ENCODE measurements at regions of chr6 and their contacts with region 1.

Region 1: DNA sequence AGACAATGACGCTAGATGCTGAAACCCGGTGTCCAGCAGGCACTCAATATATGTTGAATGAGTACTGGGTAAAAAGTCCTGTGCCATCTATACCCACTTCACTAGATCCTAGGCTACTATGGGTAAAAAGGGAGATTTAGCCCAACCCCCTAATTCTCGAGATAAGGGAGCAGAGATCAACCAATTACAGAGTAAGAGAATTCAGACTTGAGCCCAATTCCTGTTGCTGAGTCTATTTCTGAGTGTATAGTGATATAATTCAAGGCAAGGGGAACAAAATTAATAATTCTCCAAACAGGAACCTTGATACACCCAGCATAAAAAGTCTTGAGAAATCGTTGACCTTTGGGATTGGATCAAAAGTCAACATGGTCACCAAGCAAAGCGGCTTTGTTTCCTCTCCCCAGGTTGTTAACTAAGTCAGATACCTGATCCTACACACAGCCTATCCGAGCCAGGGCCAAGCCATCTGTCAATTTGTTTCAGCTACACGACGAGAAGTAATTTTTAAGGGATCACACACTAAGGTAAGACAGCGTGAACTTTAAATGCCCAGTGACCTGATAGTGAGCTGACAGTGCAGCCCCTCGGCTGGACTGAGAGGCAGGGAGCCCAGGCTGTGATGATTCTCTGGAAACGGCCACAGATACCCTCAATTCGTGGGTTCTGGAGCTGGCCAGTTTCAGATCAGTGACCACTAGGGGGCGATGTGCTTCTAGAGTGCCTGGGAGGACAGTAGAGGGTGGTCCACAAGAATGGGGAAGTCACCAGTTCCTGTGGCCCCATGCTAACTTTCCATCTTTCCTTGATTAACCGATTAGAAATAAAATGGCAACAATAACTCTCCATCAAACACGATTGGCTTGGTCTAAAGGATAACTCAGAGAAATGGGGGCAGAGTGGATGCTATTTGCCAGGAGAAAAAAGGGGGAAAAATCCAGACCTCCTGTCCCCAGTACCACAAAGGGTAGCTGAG is 46.2 kb downstream of the SLC22A23 start:
- DNase-seq: no peak
- H3K4me3 ChIP-seq: no peak overlapping the region
- H3K27ac ChIP-seq: no peak overlapping the region
- H3K4me1 ChIP-seq: peaks cover 15% of the 10 kb centered on the region
- H3K27me3 ChIP-seq: no peaks in the 10 kb centered on the region
- CTCF ChIP-seq: peak; percentile 76 to 88

Region 2: DNA sequence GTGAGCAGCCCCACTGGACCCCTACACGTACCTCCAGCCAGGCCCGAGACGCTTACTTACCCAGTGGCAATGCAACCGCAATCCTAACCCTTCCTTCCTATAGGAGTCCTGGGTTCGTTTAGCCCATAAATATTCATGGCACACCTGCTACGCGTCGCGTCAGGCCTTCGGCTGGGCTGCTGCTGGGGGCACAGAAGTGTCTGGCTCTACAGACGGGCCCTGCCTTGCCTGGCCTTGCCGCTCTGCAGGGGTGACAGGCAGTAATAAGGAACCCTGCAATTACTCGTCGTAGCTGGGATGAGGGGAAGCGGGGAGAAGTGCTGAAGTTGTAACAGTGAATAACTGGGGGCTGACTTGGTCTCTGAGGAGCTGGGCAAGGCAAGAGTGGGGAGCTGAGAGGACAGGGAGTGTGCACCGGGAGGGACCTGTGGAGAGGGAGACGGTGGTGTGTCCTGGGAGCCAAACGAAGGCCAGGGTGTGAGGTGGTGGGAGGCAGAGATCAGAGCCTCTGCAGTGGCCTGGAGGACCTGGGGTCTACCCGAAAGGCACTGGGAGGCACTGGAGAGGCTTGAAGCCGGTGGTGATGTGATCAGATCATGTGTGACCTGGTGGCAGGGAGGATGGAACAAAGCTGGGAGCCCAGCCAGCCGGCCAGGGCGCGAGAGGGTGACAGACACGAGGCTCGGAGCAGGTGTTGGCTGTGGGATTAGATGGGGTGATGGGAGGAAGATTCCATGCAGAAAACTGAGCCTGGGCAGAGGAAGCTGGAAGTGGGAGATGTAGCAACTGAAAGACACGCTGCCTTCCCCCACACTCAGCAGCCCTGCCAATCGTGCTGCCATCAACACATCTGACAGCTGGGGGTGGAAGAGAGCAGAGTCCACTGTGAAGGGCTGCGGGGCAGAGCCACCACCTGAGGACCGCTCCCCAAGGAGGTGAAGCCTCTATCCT is 115.5 kb before region 1 on chr6:
- CTCF ChIA-PET with region 1: no interaction called
- dilution Hi-C with region 1: loop called (anchors 5 kb)
- in situ Hi-C with region 1: no loop called
- intact Hi-C with region 1: no loop called
- DNase-seq: no peak
- H3K4me3 ChIP-seq: no peak overlapping the region
- H3K27ac ChIP-seq: no peak overlapping the region
- H3K4me1 ChIP-seq: no peaks in the 10 kb centered on the region
- H3K27me3 ChIP-seq: no peaks in the 10 kb centered on the region
- CTCF ChIP-seq: no peak

Region 3: DNA sequence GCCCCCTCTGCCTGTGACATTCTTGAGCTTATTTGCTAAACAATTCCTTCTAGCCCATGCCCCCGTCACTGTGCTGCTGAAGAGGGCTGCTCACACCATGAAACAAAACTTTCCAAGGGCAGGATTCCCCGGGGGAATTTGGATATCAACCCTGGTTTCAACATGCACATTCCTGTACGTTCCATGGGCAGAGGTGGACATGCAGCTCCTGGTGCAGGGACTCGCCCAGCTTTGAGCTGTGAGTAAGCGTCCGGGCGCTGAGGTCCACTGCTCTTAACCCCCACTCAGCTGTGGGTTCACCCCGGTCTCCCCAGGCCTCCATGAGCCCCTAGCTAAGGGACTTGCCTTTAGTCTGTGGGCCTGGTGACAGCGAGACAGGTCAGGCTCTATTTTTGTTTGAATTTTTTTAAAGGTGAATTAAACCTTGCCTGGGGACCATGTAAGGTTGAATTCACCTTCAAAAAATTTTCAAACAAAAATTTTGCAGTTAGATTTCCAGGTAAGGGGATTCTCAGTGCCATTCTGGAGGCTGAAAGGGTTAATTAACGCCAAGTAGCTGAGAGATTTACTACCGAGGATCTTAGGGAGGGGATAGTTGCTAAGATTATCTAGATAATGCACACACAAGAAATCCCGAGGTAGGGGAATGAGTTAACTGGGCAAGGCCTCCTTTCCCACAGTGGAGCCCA is 116.4 kb after region 1 on chr6:
- CTCF ChIA-PET with region 1: no interaction called
- dilution Hi-C with region 1: no loop called
- in situ Hi-C with region 1: no loop called
- intact Hi-C with region 1: no loop called
- DNase-seq: peak; percentile 96
- H3K4me3 ChIP-seq: no peak overlapping the region
- H3K27ac ChIP-seq: peak overlapping the region; percentile 78
- H3K4me1 ChIP-seq: peaks cover 51% of the 10 kb centered on the region
- H3K27me3 ChIP-seq: no peaks in the 10 kb centered on the region
- CTCF ChIP-seq: no peak

Region 4: DNA sequence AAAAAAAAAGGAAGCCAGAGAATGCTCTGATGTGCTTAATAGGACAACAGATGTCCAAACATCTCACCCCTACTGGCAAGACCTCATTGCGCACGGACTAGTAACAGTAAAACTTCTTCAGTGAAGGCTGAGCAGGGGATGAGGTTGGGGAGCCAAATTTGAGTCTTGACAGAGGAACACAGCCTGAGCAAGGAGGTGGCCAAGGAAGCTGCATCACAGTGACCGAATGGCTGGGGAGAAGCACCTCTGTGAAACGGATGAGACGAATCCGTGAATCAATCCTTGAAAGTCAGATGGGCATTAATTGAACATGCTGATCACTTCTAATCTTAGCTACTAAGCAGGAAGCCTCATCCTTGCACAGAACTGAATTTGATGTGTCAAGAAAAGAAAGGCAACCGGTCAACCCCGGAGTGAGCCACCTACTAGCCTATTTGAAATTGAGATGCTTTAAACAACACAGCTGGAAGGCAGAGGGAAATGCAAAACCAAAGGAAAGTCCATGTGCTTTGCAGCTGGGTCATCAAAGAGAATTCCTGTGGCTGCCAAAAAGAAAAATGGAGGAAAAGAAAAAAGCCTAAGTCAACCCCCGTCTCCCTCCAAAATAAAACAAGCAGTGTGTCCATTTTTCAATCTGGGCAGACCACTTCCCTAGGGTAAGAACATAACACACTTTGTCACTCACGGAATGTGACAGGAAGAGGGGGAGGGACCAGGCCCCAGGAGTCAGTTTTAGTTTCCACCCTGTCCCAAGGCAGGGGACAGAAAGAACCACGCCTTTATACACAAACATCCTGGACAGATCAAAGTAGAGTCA is 311.3 kb after region 1 on chr6:
- CTCF ChIA-PET with region 1: no interaction called
- dilution Hi-C with region 1: loop called (anchors 5 kb)
- in situ Hi-C with region 1: no loop called
- intact Hi-C with region 1: no loop called
- DNase-seq: no peak
- H3K4me3 ChIP-seq: no peak overlapping the region
- H3K27ac ChIP-seq: no peak overlapping the region
- H3K4me1 ChIP-seq: no peaks in the 10 kb centered on the region
- H3K27me3 ChIP-seq: no peaks in the 10 kb centered on the region
- CTCF ChIP-seq: no peak